ENCODE measurements at regions of chr11 and their contacts with region 1.

Region 1: GRCh38 chr11:11028017-11028692 is 170.3 kb upstream of the ZBED5 start:
- DNase-seq: peak; percentile 74 to 79
- H3K4me3 ChIP-seq: no peak overlapping the region
- H3K4me3 Mint-ChIP-seq: no peak overlapping the region
- H3K27ac Mint-ChIP-seq: no peak overlapping the region
- H3K4me1 ChIP-seq: no peaks in the 10 kb centered on the region
- H3K4me1 Mint-ChIP-seq: no peaks in the 10 kb centered on the region
- H3K27me3 ChIP-seq: no peaks in the 10 kb centered on the region; the same call in 1 of the 2 replicates
- H3K27me3 Mint-ChIP-seq: peaks cover 7% of the 10 kb centered on the region
- CTCF ChIP-seq: peak; percentile 83 to 90

Region 2: DNA sequence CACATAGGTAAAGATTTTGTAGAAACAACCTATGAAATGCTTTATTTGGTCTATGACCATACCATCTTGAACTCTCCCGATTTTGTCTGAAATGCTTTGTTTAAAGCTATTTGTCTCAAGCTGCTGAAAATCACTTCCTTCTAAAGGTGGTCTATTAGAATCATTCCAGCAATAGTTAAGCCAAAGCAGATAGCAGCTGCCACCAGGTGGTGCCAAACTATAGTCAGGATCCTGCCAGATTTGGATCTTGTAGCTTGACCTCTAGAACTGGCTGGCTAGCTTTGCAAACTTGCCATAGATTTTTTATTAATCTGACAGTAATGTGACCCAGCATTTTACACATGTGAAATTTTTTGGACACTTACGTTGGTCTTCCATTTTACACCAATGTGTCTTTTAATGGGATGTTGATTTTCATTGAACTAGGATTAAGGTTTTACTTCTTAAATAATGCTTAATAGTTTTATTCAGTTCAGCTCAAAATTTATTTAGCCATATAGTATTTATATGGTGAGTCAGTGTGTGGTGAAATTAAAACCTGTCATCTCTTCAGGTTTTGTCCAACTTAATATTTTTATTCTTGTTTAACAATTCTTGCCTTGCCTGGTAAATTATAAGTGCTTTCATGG is 257.4 kb before region 1 on chr11:
- CTCF ChIA-PET with region 1: interaction called, 11 read pairs
- POLR2A ChIA-PET with region 1: no interaction called
- intact Hi-C with region 1: no loop called
- DNase-seq: peak; percentile 59 to 60
- H3K4me3 ChIP-seq: no peak overlapping the region
- H3K4me3 Mint-ChIP-seq: no peak overlapping the region
- H3K27ac Mint-ChIP-seq: no peak overlapping the region
- H3K4me1 ChIP-seq: no peaks in the 10 kb centered on the region
- H3K4me1 Mint-ChIP-seq: no peaks in the 10 kb centered on the region
- H3K27me3 ChIP-seq: no peaks in the 10 kb centered on the region
- H3K27me3 Mint-ChIP-seq: no peaks in the 10 kb centered on the region
- CTCF ChIP-seq: peak; percentile 79 to 86

Region 3: DNA sequence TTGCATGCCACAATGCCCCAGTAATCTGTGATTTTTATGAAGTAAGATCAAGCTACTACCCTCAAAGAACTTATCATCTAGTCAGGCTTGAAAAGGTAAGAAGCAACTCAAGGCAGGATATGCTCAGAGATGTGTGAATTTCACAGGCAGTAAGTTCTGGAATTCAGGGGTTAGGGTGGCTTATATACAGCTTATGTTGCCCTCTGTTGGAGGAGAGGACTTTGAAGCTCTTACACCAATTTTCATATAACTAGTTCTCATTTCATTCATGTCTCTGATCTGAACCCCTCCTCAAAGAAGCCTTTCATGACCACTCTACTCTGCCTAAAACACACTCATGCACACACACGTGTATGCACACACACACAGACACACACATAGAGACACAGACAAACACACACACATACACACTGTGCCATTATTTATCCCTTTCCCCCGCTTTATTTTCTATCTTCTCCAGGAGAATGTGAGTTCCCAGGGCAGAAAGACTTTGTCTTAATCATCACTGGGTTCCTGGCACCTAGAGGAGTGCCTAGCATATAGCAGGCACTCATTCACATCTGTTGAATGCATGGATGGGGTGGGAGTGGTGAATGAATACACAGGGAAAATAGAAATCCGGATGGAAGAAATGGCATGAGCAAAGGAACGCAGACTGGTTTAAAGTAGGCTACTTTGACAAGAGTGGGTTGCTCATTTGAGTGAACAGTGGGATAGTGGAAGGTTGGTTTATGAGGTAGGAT is 50.4 kb after region 1 on chr11:
- CTCF ChIA-PET with region 1: interaction called, 10 read pairs
- POLR2A ChIA-PET with region 1: no interaction called
- intact Hi-C with region 1: loop called (anchors 5 kb)
- DNase-seq: no peak
- H3K4me3 ChIP-seq: no peak overlapping the region
- H3K4me3 Mint-ChIP-seq: no peak overlapping the region
- H3K27ac Mint-ChIP-seq: no peak overlapping the region
- H3K4me1 ChIP-seq: no peaks in the 10 kb centered on the region
- H3K4me1 Mint-ChIP-seq: peaks cover under 1% of the 10 kb centered on the region
- H3K27me3 ChIP-seq: no peaks in the 10 kb centered on the region; the same call in 1 of the 2 replicates
- H3K27me3 Mint-ChIP-seq: peaks cover 14% of the 10 kb centered on the region
- CTCF ChIP-seq: no peak

Region 4: GRCh38 chr11:11157185-11157584 is 129.0 kb after region 1 on chr11:
- CTCF ChIA-PET with region 1: interaction called, 14 read pairs
- POLR2A ChIA-PET with region 1: no interaction called
- intact Hi-C with region 1: loop called (anchors 1 kb)
- DNase-seq: peak; percentile 53 to 68
- H3K4me3 ChIP-seq: no peak overlapping the region
- H3K4me3 Mint-ChIP-seq: no peak overlapping the region
- H3K27ac Mint-ChIP-seq: no peak overlapping the region
- H3K4me1 ChIP-seq: no peaks in the 10 kb centered on the region
- H3K4me1 Mint-ChIP-seq: no peaks in the 10 kb centered on the region
- H3K27me3 ChIP-seq: 0 out of 2 replicates have a peak, but pooled peaks cover 1% of the 10 kb centered on the region
- H3K27me3 Mint-ChIP-seq: no peaks in the 10 kb centered on the region
- CTCF ChIP-seq: peak; percentile 64 to 86

Region 5: DNA sequence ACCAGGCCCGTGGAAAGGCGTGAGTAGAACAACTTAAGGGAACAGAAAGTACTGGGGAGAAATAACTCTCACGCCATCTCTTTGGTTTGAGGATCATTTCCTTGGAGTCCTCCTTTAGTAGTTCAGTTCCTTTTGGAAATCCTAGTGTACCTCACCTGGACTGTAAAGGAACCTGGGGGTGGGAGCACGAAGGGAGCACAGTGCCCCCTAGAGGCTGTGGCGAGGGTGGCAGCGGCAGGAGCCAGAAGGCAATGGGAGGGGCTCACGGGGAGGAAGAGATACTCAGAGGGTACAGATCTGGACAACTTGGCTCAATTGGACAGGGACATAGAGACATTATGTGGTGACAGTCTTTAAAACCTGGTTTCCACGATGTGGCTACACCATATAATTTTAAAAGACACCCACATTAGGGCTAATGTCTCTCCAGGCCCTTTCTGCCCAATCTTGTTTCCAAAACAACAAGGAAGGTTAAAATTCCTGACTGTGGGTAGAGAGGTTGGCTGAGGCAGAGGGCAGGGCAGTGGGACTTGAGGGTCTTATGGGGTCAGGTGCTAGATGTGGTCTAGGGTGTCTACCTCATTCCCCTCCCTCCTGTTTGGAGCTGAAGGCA is 237.9 kb after region 1 on chr11:
- CTCF ChIA-PET with region 1: interaction called, 5 read pairs
- POLR2A ChIA-PET with region 1: no interaction called
- intact Hi-C with region 1: loop called (anchors 1 kb)
- DNase-seq: peak; percentile 58 to 78
- H3K4me3 ChIP-seq: no peak overlapping the region
- H3K4me3 Mint-ChIP-seq: no peak overlapping the region
- H3K27ac Mint-ChIP-seq: no peak overlapping the region
- H3K4me1 ChIP-seq: no peaks in the 10 kb centered on the region
- H3K4me1 Mint-ChIP-seq: no peaks in the 10 kb centered on the region
- H3K27me3 ChIP-seq: no peaks in the 10 kb centered on the region; the same call in 1 of the 2 replicates
- H3K27me3 Mint-ChIP-seq: peaks cover 5% of the 10 kb centered on the region
- CTCF ChIP-seq: peak; percentile 83 to 86